Dendritic cell treated with granulocyte-macrophage colony-stimulating factor and Interleukin-4, amounts not matched to agents 40 ng/mL and 50 ng/mL, for 4 days (primary cell): ENCODE measurements at regions of chr5 and their contacts with region 1.

Region 1: DNA sequence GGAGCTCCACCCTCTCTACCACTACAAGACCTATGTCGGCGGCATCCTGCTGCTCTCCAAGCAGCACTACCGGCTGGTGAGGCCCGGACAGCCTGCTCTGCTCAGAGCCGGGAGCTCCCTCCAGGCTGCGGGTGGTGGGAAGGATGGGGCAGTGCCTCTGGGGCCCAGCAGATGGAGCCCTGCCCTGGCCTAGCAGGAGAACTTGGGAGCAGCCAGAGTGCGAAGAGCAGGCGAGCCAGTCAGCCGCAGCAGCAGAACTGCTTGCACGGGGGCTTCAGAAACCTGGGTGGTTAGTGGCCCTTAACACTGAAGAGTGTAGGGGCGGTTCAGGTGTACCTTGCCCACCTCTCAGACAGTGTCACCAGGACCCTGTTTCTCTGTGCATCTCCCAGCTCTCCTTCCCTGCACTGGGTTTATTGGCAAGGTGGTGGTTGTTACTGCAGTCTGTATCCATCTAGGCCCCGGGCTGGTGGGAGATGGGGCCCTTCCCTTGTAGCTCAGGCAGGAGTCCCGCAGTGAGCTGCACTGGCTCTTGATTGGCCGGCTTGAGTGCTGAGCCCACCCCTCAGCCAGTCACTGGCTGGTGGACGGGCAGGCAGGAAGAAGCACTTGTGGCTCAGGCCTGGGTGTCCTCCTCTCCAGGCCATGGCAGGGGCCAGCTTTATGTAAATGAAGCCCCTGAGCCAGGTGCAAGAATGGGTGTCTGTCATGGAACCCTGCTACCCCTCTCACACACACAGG is 7.7 kb downstream of the B4GALT7 start:
- H3K4me3 Mint-ChIP-seq: no peak overlapping the region
- H3K27ac Mint-ChIP-seq: no peak overlapping the region
- H3K4me1 Mint-ChIP-seq: peaks cover 14% of the 10 kb centered on the region
- H3K27me3 Mint-ChIP-seq: no peaks in the 10 kb centered on the region

Region 2: DNA sequence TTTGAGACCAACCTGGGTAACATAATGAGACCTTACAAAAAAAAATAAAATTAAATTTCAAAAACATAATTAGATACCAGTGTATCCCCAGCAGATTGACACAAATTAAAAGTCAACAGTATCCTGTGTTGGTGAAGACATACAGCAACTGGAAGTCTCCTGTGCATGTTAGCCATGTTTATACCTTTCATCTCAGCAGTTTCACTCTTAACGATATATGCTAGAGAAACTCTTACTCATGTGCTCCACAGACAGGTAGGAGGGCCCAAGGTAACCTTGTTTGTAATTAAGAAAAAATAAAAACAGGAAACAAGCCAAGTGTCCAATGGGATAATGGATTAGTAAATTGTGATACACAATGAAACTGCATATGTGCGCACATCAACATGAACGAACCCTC is 455.7 kb after region 1 on chr5:
- intact Hi-C with region 1: loop called (anchors 5 kb)
- H3K4me3 Mint-ChIP-seq: no peak overlapping the region
- H3K27ac Mint-ChIP-seq: no peak overlapping the region
- H3K4me1 Mint-ChIP-seq: no peaks in the 10 kb centered on the region
- H3K27me3 Mint-ChIP-seq: peaks cover 8% of the 10 kb centered on the region